AG04449 (cell line): ENCODE measurements at regions of chr10 and their contacts with region 1.

Region 1: DNA sequence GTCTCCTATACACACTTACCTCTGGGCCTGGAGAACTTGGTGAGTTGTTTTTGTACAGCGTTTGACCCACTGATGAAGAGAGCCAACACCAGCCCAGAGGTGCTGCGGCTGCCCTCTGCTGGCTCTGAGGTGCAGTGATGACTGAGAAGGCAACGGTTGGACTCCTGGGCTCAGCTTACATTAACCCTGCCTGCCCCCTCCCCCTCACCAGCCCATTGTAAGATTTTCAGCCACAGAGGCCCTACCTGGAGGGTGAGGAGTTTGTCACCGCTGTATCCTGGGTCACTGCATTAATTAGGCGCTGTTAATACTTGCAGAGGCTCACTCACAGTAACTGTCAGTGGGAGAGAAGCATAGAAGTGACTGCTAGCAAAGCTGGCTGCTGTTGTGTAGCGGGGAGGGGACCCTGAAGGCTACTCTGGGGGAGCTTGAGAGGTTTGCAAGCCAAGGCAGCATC is 19.0 kb upstream of the ANKRD2 start:
- DNase-seq: no peak
- H3K4me3 ChIP-seq: no peak overlapping the region
- CTCF ChIP-seq: peak; percentile 96

Region 2: DNA sequence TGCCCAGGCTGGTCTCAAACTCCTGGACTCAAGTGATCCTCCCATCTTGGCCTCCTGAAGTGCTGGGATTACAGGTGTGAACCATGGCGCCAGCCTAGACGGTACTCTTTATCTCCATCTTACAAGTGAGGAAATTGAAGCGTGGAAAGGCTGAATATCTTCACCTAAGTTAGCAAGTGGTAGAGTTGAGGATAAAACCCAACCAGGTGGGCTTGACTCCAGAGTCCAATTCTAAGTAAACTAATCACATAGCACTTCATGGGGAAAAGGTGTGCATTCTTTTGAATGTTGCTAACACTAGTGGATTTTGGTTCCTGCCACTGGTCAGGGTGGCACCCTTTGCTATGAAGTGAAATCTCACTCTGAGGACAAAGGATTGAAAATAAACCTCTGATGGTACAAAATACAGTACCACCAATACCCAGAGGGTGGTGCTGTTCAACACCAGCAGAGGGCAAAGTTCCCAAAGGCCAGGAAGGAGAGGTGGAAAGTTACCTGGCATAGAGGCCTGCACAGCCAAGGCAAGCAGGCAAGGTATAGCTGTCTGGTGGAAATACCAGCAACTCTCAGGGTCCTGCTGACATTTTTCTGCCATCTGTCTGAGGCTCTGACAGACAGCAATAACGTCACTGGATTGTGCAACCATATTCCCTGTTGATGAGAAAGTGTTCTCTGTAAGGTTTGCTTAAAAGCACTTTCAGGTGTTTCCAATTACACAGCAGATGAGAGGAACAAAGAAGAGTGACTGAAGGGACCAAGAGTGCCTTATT is 90.1 kb before region 1 on chr10:
- CTCF ChIA-PET with region 1: interaction called, 188 read pairs
- POLR2A ChIA-PET with region 1: interaction called, 5 read pairs
- DNase-seq: no peak
- H3K4me3 ChIP-seq: no peak overlapping the region
- CTCF ChIP-seq: peak; percentile 71

Region 3: DNA sequence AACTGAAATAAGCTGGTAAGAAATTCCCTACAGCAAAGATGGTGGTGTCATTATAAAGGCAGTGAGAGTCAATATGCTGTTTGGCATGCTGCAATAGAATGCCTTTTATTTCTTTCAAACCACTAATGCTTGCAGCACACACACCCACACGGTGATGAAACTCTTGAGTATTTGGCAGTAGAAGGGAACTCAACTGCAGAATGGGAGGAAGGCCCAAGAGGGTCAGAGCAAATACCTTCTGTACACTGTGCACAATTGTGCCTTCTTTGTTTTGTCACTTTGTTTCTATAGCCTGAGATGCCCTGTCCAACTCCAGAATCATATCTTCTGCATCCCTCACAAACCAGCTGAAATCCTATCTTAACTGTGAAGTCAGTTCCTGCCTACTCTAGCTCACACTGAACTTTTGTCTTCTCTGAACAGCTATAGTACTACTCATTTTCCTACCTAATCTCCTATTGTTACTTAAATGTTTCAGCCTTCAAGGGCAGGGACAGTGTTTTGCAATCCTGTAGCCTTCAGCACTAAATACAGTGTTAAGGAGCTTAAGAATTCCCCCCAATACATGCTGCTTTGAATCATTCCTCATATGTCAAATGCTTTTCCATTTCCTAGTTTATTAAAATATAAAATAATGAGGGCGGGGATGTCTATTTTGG is 77.5 kb before region 1 on chr10:
- CTCF ChIA-PET with region 1: interaction called, 13 read pairs
- POLR2A ChIA-PET with region 1: no interaction called
- DNase-seq: peak; percentile 58
- H3K4me3 ChIP-seq: no peak overlapping the region
- CTCF ChIP-seq: no peak

Region 4: DNA sequence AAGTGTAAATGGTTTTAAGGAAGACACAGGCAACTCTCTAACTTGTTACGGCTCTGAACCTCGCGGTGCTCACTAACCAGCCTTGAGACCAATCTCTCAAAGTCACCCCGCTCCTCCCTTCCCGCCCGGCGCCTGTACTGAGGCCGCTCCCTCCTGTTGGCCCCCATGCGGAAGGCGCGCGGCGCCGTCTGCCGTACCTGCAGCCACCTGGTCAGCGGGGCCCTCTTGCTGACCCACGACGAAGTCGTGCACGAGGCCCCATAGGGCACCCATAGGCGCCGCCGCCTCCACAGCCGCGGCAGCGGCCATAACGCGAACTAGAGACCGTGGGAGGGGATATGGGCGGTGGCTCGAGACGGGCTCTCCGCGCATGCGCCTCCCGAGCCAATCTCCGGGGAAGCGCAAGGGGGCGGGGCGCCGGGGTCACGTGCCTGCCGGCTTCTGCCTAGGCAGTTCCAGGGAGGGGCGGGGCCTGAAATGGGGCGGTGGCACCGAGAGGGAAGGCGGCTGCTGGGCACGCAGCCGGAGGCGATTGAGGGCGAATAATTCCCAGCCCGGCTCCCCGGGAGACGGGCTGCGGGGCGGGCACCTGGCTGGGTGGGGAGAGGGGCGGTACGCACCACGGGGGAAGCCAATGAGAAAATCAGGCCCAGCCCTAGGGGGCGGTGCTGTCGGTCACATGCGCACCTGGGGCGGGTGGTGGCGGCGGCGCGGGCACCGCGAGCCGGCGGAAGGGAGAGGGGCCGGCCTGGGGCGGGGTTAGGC is 55.3 kb before region 1 on chr10 and contains the start of gene MMS19:
- CTCF ChIA-PET with region 1: interaction called, 28 read pairs
- POLR2A ChIA-PET with region 1: no interaction called
- DNase-seq: peak; percentile 83
- H3K4me3 ChIP-seq: peak within 1 kb of the TSS; percentile 99
- CTCF ChIP-seq: no peak

Region 5: GRCh38 chr10:97543025-97543575 is 10.5 kb before region 1 on chr10:
- CTCF ChIA-PET with region 1: interaction called, 150 read pairs
- POLR2A ChIA-PET with region 1: interaction called, 3 read pairs
- DNase-seq: peak; percentile 83
- H3K4me3 ChIP-seq: peak overlapping the region; percentile 8; the same call in 1 of the 2 replicates
- CTCF ChIP-seq: no peak

Region 6: GRCh38 chr10:97572214-97572989 is 18.8 kb after region 1 on chr10 and contains the start of gene ANKRD2:
- CTCF ChIA-PET with region 1: interaction called, 157 read pairs
- POLR2A ChIA-PET with region 1: no interaction called
- DNase-seq: no peak
- H3K4me3 ChIP-seq: no peak within 1 kb of the TSS
- CTCF ChIP-seq: peak; percentile 93